ENCODE measurements at regions of chrX and their contacts with region 1.

Region 1: DNA sequence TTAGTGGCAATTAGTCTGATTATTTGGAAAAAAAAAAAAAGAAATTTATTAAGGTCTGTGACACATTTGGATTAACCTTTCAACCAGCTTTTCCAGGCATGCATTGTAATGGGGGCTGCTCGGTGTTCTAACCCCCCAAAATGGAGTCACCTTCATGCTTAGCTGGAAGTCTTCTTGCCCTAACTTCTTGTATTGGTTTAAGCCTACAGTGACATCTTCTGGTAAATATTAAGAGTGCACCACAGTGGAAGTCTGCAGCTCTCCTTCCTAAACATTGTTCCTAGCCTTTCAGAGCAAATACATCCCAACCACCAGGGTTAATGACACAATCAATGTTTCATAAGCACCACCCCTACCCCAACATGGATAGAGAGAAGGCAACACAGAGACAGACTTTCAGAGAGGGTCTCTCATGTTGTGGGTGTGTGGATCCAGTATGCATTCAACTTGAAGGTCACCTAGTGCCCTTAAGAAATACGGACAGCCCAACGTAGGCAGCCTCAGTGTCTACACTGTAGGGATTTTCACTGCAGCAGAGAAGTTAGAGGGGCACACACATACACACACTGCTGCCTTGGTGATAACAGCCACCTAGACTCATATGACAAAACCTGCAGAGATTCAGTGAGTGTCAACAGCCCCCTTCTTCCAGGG is 142.9 kb upstream of the MBNL3 start:
- DNase-seq: peak in 7 of 9 donors; percentile 8 to 39 (median 27)
- ATAC-seq: peak; percentile 61
- H3K4me3 ChIP-seq: no peak overlapping the region
- H3K4me3 Mint-ChIP-seq: no peak overlapping the region
- H3K27ac ChIP-seq: no peak overlapping the region
- H3K27ac Mint-ChIP-seq: no peak overlapping the region
- H3K4me1 ChIP-seq: no peaks in the 10 kb centered on the region
- H3K4me1 Mint-ChIP-seq: peaks cover 0 to 1% (median 0%) of the 10 kb centered on the region in 7 donors
- H3K27me3 ChIP-seq: no peaks in the 10 kb centered on the region
- H3K27me3 Mint-ChIP-seq: no peaks in the 10 kb centered on the region

Region 2: DNA sequence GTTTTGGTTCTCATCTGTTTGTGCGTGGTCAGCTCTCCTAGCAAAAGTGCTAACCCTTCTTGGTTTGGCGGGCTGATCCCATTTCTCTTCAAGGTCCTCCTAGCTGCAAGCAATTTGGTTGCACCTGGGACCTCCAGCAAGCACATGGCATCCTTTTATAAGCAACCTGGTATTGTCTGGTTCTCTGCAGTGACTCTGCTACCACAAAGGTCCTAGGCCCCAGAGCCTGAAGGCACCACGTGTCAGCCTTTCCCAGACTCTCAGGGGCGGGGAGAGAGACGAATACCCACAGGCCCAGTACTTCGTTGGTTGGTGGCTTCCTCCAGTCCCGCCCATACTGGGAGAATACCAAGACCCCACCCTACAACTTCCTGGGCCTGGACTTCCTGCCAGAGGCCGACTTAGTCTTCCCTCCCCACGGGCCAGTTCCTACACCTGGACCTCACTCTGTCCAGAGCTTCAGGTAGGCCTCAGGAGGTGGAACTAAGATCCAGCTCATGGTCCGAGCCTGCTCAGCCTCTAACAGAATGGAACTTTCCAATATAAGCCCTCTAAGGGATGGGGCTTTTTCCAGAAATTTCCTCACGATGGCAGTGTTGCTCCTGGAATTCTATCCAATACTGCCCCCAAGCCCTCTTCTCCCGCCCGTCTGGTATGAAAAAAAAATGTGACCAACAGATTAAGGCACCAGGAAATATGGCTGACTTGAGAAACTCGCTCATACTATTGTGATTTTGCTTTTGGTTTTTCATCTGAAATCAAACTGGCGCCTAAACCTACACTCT is 801.1 kb before region 1 on chrX:
- CTCF ChIA-PET with region 1: interaction called, 7 read pairs
- POLR2A ChIA-PET with region 1: no interaction called
- intact Hi-C with region 1: loop called (anchors 1 to 5 kb)
- DNase-seq: peak in 8 of 9 donors; percentile 59 to 83 (median 72)
- ATAC-seq: peak; percentile 76
- H3K4me3 ChIP-seq: peak overlapping the region; percentile 37
- H3K4me3 Mint-ChIP-seq: peak overlapping the region; percentile 61 to 90 (median 72)
- H3K27ac ChIP-seq: peak overlapping the region; percentile 55
- H3K27ac Mint-ChIP-seq: peak overlapping the region; percentile 42 to 91 (median 81)
- H3K4me1 ChIP-seq: peaks cover 0 to 14% of the 10 kb centered on the region in 2 donors
- H3K4me1 Mint-ChIP-seq: peaks cover 1 to 44% (median 35%) of the 10 kb centered on the region in 7 donors
- H3K27me3 ChIP-seq: no peaks in the 10 kb centered on the region
- H3K27me3 Mint-ChIP-seq: no peaks in the 10 kb centered on the region

Region 3: GRCh38 chrX:131841496-131842410 is 790.0 kb before region 1 on chrX:
- CTCF ChIA-PET with region 1: interaction called, 6 read pairs
- POLR2A ChIA-PET with region 1: no interaction called
- intact Hi-C with region 1: loop called (anchors 1 to 5 kb)
- DNase-seq: peak in 8 of 9 donors; percentile 5 to 67 (median 49)
- ATAC-seq: peak; percentile 81
- H3K4me3 ChIP-seq: no peak overlapping the region
- H3K4me3 Mint-ChIP-seq: peak overlapping the region in 1 of 10 donors; percentile 56
- H3K27ac ChIP-seq: no peak overlapping the region
- H3K27ac Mint-ChIP-seq: no peak overlapping the region
- H3K4me1 ChIP-seq: no peaks in the 10 kb centered on the region
- H3K4me1 Mint-ChIP-seq: peaks cover 0 to 9% (median 0%) of the 10 kb centered on the region in 7 donors
- H3K27me3 ChIP-seq: no peaks in the 10 kb centered on the region
- H3K27me3 Mint-ChIP-seq: peaks cover 0 to 2% (median 0%) of the 10 kb centered on the region in 5 donors

Region 4: GRCh38 chrX:132092439-132093065 is 539.2 kb before region 1 on chrX:
- CTCF ChIA-PET with region 1: interaction called, 3 read pairs
- POLR2A ChIA-PET with region 1: no interaction called
- intact Hi-C with region 1: loop called in 1 of 2 experiments (anchors 1 kb)
- DNase-seq: peak; percentile 5 to 52 (median 33)
- ATAC-seq: peak; percentile 83
- H3K4me3 ChIP-seq: no peak overlapping the region
- H3K4me3 Mint-ChIP-seq: no peak overlapping the region
- H3K27ac ChIP-seq: no peak overlapping the region
- H3K27ac Mint-ChIP-seq: no peak overlapping the region
- H3K4me1 ChIP-seq: no peaks in the 10 kb centered on the region
- H3K4me1 Mint-ChIP-seq: peaks cover 0 to 11% (median 7%) of the 10 kb centered on the region in 7 donors
- H3K27me3 ChIP-seq: no peaks in the 10 kb centered on the region
- H3K27me3 Mint-ChIP-seq: peaks cover 0 to 7% (median 0%) of the 10 kb centered on the region in 5 donors

Region 5: GRCh38 chrX:132226169-132226568 is 405.5 kb before region 1 on chrX:
- CTCF ChIA-PET with region 1: no interaction called
- POLR2A ChIA-PET with region 1: no interaction called
- intact Hi-C with region 1: loop called (anchors 1 to 5 kb)
- DNase-seq: peak in 2 of 9 donors; percentile 11 to 12
- ATAC-seq: no peak
- H3K4me3 ChIP-seq: no peak overlapping the region
- H3K4me3 Mint-ChIP-seq: no peak overlapping the region
- H3K27ac ChIP-seq: no peak overlapping the region
- H3K27ac Mint-ChIP-seq: no peak overlapping the region
- H3K4me1 ChIP-seq: no peaks in the 10 kb centered on the region
- H3K4me1 Mint-ChIP-seq: peaks cover 5 to 11% (median 9%) of the 10 kb centered on the region in 7 donors
- H3K27me3 ChIP-seq: no peaks in the 10 kb centered on the region
- H3K27me3 Mint-ChIP-seq: no peaks in the 10 kb centered on the region

Region 6: GRCh38 chrX:133365871-133366611 is 734.3 kb after region 1 on chrX:
- CTCF ChIA-PET with region 1: no interaction called
- POLR2A ChIA-PET with region 1: no interaction called
- intact Hi-C with region 1: no loop called
- DNase-seq: no peak
- ATAC-seq: no peak
- H3K4me3 ChIP-seq: no peak overlapping the region
- H3K4me3 Mint-ChIP-seq: no peak overlapping the region
- H3K27ac ChIP-seq: no peak overlapping the region
- H3K27ac Mint-ChIP-seq: no peak overlapping the region
- H3K4me1 ChIP-seq: no peaks in the 10 kb centered on the region
- H3K4me1 Mint-ChIP-seq: no peaks in the 10 kb centered on the region
- H3K27me3 ChIP-seq: no peaks in the 10 kb centered on the region
- H3K27me3 Mint-ChIP-seq: no peaks in the 10 kb centered on the region

Region 7: GRCh38 chrX:133670383-133670782 is 1038.7 kb after region 1 on chrX:
- CTCF ChIA-PET with region 1: interaction called, 3 read pairs
- POLR2A ChIA-PET with region 1: no interaction called
- intact Hi-C with region 1: loop called in 1 of 2 experiments (anchors 1 kb)
- DNase-seq: peak in 5 of 9 donors; percentile 2 to 6 (median 5)
- ATAC-seq: no peak
- H3K4me3 ChIP-seq: no peak overlapping the region
- H3K4me3 Mint-ChIP-seq: no peak overlapping the region
- H3K27ac ChIP-seq: no peak overlapping the region
- H3K27ac Mint-ChIP-seq: no peak overlapping the region
- H3K4me1 ChIP-seq: no peaks in the 10 kb centered on the region
- H3K4me1 Mint-ChIP-seq: no peaks in the 10 kb centered on the region
- H3K27me3 ChIP-seq: no peaks in the 10 kb centered on the region
- H3K27me3 Mint-ChIP-seq: no peaks in the 10 kb centered on the region

Measured in naive thymus-derived CD4-positive, alpha-beta T cell (primary cell).